SK-N-SH (cell line): ENCODE measurements at regions of chr2 and their contacts with region 1.

Region 1: DNA sequence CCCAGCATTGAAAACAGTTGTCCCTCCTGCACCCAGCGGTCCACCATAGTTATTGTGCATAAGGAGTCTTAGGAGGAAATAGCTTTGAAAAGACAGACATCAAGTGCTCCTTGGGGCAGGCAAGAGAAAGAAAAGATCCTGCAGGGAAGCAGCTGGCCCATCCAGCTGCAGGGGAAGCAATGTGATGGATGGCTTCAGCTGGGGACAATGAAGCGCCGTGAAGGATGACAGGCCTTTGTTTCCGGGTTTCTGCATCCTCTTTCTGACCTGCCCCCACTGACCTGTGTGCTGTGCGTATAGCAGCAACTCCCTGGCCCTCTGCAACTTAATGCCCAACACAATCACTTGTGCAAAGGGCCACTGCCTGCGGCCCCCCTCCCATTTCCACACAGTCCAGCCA is 143.0 kb upstream of the NCKAP5 start:
- DNase-seq: peak; percentile 15
- H3K4me3 ChIP-seq: no peak overlapping the region
- H3K27ac ChIP-seq: peak overlapping the region in 1 of 2 experiments; percentile 89; a peak in 2 of 4 replicates
- H3K4me1 ChIP-seq: peaks cover 0 to 26% of the 10 kb centered on the region in 2 experiments; a peak in 2 of 4 replicates
- H3K27me3 ChIP-seq: no peaks in the 10 kb centered on the region
- CTCF ChIP-seq: no peak
- EP300 ChIP-seq: no peak
- RAD21 ChIP-seq: no peak

Region 2: DNA sequence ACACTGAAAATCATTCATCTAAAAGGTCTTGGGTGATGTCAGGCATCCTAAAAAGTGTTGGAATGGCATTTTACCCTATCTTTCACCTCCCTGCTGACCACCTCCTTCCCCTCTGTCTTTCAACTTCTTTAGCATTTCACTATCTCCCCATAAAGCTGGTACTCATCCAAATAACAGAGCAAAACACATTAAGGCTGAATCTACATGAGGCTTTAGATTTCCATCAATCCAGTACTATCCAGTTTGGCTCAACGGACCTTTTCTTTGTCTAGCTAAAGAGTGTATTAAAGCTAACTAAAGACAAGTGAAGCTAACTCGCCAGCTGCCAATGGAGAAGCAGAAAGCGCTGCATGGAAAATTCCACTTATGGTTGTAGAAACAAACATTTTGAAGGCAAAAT is 20.4 kb before region 1 on chr2:
- CTCF ChIA-PET with region 1: interaction called, 12 read pairs
- POLR2A ChIA-PET with region 1: no interaction called
- DNase-seq: no peak
- H3K4me3 ChIP-seq: no peak overlapping the region
- H3K27ac ChIP-seq: no peak overlapping the region
- H3K4me1 ChIP-seq: no peaks in the 10 kb centered on the region
- H3K27me3 ChIP-seq: no peaks in the 10 kb centered on the region
- CTCF ChIP-seq: no peak
- EP300 ChIP-seq: no peak
- RAD21 ChIP-seq: no peak

Region 3: DNA sequence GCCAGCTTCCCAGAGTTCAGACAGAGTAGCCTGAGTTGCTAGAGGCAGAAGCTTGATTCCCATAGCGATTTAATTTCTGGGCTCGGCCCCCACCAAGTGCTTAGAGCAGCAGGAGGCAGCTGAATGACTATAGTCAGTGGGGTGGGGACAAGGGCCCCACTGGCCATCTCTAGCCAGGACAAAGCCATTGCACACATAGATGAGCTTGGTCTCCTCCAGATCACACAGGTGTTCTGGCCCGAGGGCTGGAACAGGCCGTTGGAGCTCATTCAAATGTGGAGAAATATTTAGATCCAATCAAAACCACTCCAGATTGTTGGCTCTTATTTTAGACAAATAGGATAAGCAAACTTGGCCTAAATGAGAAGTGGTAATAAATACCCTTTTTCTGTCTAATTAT is 144.3 kb after region 1 on chr2:
- CTCF ChIA-PET with region 1: no interaction called
- POLR2A ChIA-PET with region 1: no interaction called
- DNase-seq: no peak
- H3K4me3 ChIP-seq: no peak overlapping the region
- H3K27ac ChIP-seq: no peak overlapping the region
- H3K4me1 ChIP-seq: peaks cover 0 to 2% of the 10 kb centered on the region in 2 experiments; a peak in 1 of 4 replicates
- H3K27me3 ChIP-seq: no peaks in the 10 kb centered on the region
- CTCF ChIP-seq: no peak
- EP300 ChIP-seq: no peak
- RAD21 ChIP-seq: no peak